ENCODE measurements at regions of chr20 and their contacts with region 1.

Region 1: GRCh38 chr20:41249406-41250281 is 67.9 kb downstream of the ZHX3 start:
- DNase-seq: peak; percentile 87 to 92 (median 87)
- ATAC-seq: peak; percentile 88 to 93
- H3K4me3 ChIP-seq: no peak overlapping the region
- H3K27ac ChIP-seq: peak overlapping the region; percentile 98
- H3K4me1 ChIP-seq: peaks cover 30% of the 10 kb centered on the region
- H3K27me3 ChIP-seq: no peaks in the 10 kb centered on the region

Region 2: GRCh38 chr20:41308290-41308711 is 58.7 kb after region 1 on chr20:
- intact Hi-C with region 1: loop called in 1 of 4 experiments (anchors 10 kb)
- DNase-seq: no peak
- ATAC-seq: peak; percentile 44 to 72
- H3K4me3 ChIP-seq: no peak overlapping the region
- H3K27ac ChIP-seq: no peak overlapping the region
- H3K4me1 ChIP-seq: peaks cover 19% of the 10 kb centered on the region
- H3K27me3 ChIP-seq: no peaks in the 10 kb centered on the region

Region 3: DNA sequence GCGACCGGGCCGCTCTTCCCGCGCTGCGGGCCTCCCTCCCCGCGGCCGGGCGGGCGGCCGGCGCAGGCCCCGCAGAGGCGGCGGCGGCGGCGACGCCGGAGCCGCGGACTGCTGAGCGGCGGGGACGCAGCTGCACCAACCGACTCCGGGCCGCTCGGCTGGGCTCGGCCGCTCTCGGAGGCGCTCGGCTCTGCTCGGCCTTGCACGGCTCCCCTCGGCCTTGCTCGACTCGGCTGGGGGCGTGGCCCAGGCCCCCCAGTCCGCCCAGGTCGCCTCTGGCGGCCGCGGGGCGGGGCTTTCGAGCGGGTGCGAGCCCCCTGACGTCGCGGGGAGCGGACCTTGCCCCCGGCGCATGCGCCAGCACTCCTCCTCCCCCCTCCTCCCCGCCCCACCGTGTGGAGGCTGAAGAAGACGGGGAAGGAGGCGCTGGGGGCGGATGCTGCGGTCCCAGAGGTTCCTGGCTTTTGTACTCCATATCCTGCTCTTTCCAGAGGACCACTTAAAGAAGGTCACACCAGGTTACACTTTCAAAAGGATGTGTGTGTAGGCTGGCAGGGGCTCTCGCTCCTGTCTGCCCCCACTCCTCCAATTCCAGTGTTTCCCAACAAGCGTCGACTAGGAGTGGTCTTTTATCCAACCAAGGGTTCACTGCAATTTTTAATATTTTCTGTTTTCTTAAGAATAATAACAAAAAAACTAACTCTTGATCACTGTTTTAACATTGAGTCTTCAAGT is 68.1 kb after region 1 on chr20 and contains the start of gene ZHX3:
- intact Hi-C with region 1: loop called in 1 of 4 experiments (anchors 5 kb)
- DNase-seq: peak; percentile 99
- ATAC-seq: peak; percentile 99
- H3K4me3 ChIP-seq: peak within 1 kb of the TSS; percentile 82
- H3K27ac ChIP-seq: peak within 1 kb of the TSS; percentile 93
- H3K4me1 ChIP-seq: peaks cover 2% of the 10 kb centered on the region
- H3K27me3 ChIP-seq: no peaks in the 10 kb centered on the region
- total RNA-seq, gene ZHX3: 32.5 to 39.7 (median 35.6) TPM

Measured in right cardiac atrium (tissue), 5 donors.